ENCODE measurements at regions of chr18 and their contacts with region 1.

Region 1: GRCh38 chr18:35227254-35227653 is 13.6 kb upstream of the ZNF397 start:
- DNase-seq: no peak
- H3K4me3 ChIP-seq: no peak overlapping the region
- H3K27ac ChIP-seq: no peak overlapping the region
- H3K4me1 ChIP-seq: no peaks in the 10 kb centered on the region
- H3K27me3 ChIP-seq: no peaks in the 10 kb centered on the region
- CTCF ChIP-seq: no peak
- EP300 ChIP-seq: no peak
- POLR2A ChIP-seq: no peak

Region 2: GRCh38 chr18:35029770-35030169 is 197.5 kb before region 1 on chr18:
- intact Hi-C with region 1: no loop called
- DNase-seq: no peak
- H3K4me3 ChIP-seq: peak overlapping the region; percentile 1
- H3K27ac ChIP-seq: no peak overlapping the region
- H3K4me1 ChIP-seq: no peaks in the 10 kb centered on the region
- H3K27me3 ChIP-seq: no peaks in the 10 kb centered on the region
- CTCF ChIP-seq: no peak
- EP300 ChIP-seq: no peak
- POLR2A ChIP-seq: no peak

Region 3: GRCh38 chr18:35060122-35060815 is 167.0 kb before region 1 on chr18:
- intact Hi-C with region 1: no loop called
- DNase-seq: no peak
- H3K4me3 ChIP-seq: no peak overlapping the region
- H3K27ac ChIP-seq: no peak overlapping the region
- H3K4me1 ChIP-seq: peaks cover 11% of the 10 kb centered on the region
- H3K27me3 ChIP-seq: no peaks in the 10 kb centered on the region
- CTCF ChIP-seq: no peak
- EP300 ChIP-seq: no peak
- POLR2A ChIP-seq: no peak

Region 4: GRCh38 chr18:35334821-35335220 is 107.6 kb after region 1 on chr18:
- intact Hi-C with region 1: loop called in 1 of 4 experiments (anchors 5 kb)
- DNase-seq: no peak
- H3K4me3 ChIP-seq: no peak overlapping the region
- H3K27ac ChIP-seq: no peak overlapping the region
- H3K4me1 ChIP-seq: no peaks in the 10 kb centered on the region
- H3K27me3 ChIP-seq: no peaks in the 10 kb centered on the region
- CTCF ChIP-seq: no peak
- EP300 ChIP-seq: no peak
- POLR2A ChIP-seq: no peak

Measured in ovary (tissue), 10 donors.